Head of caudate nucleus (tissue), 42 donors: ENCODE measurements at regions of chr7 and their contacts with region 1.

Region 1: GRCh38 chr7:5231811-5232484 is 41.9 kb downstream of the WIPI2 start:
- DNase-seq: peak in 3 of 42 donors; percentile 36 to 55 (median 49)

Region 2: GRCh38 chr7:5012985-5013384 is 219.0 kb before region 1 on chr7:
- intact Hi-C with region 1: no loop called
- DNase-seq: no peak

Region 3: GRCh38 chr7:5284304-5285281 is 52.6 kb after region 1 on chr7:
- intact Hi-C with region 1: no loop called
- DNase-seq: peak; percentile 21 to 79 (median 66)

Region 4: GRCh38 chr7:5450549-5451372 is 218.8 kb after region 1 on chr7:
- intact Hi-C with region 1: loop called (anchors 10 kb)
- DNase-seq: peak; percentile 38 to 86 (median 70)